ENCODE measurements at regions of chr1 and their contacts with region 1.

Region 1: GRCh38 chr1:38818175-38818976 is 41.2 kb downstream of the RRAGC start:
- DNase-seq: peak in 1 of 2 donors; percentile 36
- ATAC-seq: peak in 6 of 8 donors; percentile 50 to 82 (median 67)
- H3K4me3 ChIP-seq: peak overlapping the region in 8 of 10 donors; percentile 4 to 42 (median 32)
- H3K27ac ChIP-seq: no peak overlapping the region
- H3K4me1 ChIP-seq: peaks cover 0 to 17% (median 11%) of the 10 kb centered on the region in 9 donors
- H3K27me3 ChIP-seq: peaks cover 2 to 88% (median 66%) of the 10 kb centered on the region in 7 donors
- CTCF ChIP-seq: peak; percentile 64 to 90 (median 80)

Region 2: GRCh38 chr1:38026592-38027200 is 791.7 kb before region 1 on chr1:
- intact Hi-C with region 1: loop called in 1 of 10 experiments (anchors 10 kb)
- DNase-seq: peak in 1 of 2 donors; percentile 35
- ATAC-seq: peak in 1 of 8 donors; percentile 17
- H3K4me3 ChIP-seq: no peak overlapping the region
- H3K27ac ChIP-seq: no peak overlapping the region
- H3K4me1 ChIP-seq: peaks cover 11 to 42% (median 26%) of the 10 kb centered on the region in 9 donors
- H3K27me3 ChIP-seq: no peaks in the 10 kb centered on the region
- CTCF ChIP-seq: peak; percentile 18 to 66 (median 55)

Region 3: DNA sequence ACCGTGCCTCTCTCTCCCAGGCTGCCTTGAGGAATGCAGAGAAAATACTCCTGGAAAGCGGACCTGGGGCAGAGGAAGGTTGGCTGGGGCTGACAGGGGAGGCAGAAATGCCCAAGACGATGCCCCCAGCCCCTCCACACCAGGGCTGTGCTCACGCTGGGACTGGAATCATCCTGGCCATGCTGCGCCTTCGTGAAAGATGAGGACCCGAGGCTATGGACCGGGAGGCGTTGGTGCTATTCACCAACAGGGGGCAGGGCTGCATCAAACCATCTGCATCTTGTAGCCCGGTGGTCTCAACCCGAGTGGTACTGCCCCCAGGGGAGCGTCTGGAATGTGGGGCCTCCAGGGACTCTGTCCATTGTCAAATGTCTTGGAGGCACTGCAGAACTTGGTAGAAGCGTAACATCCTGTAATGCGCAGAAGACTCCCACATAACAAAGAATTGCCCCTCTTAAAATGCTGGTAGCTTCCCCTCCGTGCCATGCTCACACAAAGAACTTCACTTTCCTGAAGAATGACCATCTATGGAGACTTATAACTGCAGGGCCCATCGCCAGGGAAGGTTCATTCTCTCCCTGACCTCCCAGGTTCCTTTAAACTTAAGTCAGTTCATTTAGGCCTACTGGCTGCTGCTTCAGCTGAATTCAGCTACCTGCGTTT is 210.0 kb before region 1 on chr1:
- intact Hi-C with region 1: loop called (anchors 5 kb)
- DNase-seq: peak; percentile 16 to 36
- ATAC-seq: peak in 1 of 8 donors; percentile 72
- H3K4me3 ChIP-seq: no peak overlapping the region
- H3K27ac ChIP-seq: no peak overlapping the region
- H3K4me1 ChIP-seq: no peaks in the 10 kb centered on the region
- H3K27me3 ChIP-seq: peaks cover 0 to 57% (median 17%) of the 10 kb centered on the region in 7 donors
- CTCF ChIP-seq: peak in 8 of 9 donors; percentile 18 to 71 (median 59)

Region 4: GRCh38 chr1:38615680-38616079 is 202.7 kb before region 1 on chr1:
- intact Hi-C with region 1: loop called in 2 of 10 experiments (anchors 5 kb)
- DNase-seq: no peak
- ATAC-seq: no peak
- H3K4me3 ChIP-seq: no peak overlapping the region
- H3K27ac ChIP-seq: peak overlapping the region in 1 of 10 donors; percentile 1
- H3K4me1 ChIP-seq: peaks cover 0 to 19% (median 4%) of the 10 kb centered on the region in 9 donors
- H3K27me3 ChIP-seq: peaks cover 0 to 40% (median 13%) of the 10 kb centered on the region in 7 donors
- CTCF ChIP-seq: peak in 1 of 9 donors; percentile 14

Measured in heart right ventricle (tissue), 16 donors.